AG04449 (cell line): ENCODE measurements at regions of chr1 and their contacts with region 1.

Region 1: DNA sequence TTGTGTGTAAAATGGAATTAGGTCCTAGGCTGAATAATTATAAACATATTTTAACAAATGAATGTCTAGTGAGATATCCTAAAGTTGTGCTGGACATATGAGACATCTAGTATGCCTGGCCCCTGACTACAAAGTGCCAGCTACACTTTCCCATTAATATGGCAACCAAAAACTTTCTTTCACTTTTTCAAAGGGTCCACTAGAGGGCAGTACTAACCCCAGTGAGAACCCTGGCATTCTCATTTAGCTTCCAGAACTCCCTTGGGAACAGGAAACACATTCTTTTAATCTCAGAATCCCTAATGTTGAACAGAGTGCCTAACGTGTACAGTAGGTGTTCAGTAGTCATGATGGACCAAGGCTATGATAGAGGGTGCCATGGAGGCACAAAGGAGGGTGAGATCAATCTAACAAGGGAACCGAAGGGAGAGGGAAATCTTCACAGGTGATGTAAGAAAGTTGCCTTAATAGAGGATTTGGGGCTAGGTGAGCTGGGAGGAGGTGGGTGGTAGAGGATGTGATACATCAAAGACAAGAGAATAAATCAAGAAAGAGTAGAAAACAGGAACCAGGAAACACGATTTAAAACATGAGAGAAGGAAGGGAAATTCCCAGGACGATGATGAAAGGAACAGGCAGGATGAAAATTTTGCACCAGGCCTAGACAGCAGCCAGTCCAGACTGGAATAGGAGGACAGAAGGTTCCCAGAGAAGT is 41.6 kb downstream of the NSL1 start:
- DNase-seq: no peak
- H3K4me3 ChIP-seq: no peak overlapping the region
- CTCF ChIP-seq: peak; percentile 43

Region 2: GRCh38 chr1:212700892-212701819 is 48.8 kb before region 1 on chr1:
- CTCF ChIA-PET with region 1: interaction called, 11 read pairs
- POLR2A ChIA-PET with region 1: no interaction called
- DNase-seq: no peak
- H3K4me3 ChIP-seq: peak overlapping the region; percentile 62
- CTCF ChIP-seq: peak; percentile 19

Region 3: GRCh38 chr1:212738330-212738729 is 11.6 kb before region 1 on chr1:
- CTCF ChIA-PET with region 1: interaction called, 83 read pairs
- POLR2A ChIA-PET with region 1: no interaction called
- DNase-seq: no peak
- H3K4me3 ChIP-seq: no peak overlapping the region
- CTCF ChIP-seq: no peak

Region 4: GRCh38 chr1:212774584-212774983 is 24.6 kb after region 1 on chr1:
- CTCF ChIA-PET with region 1: interaction called, 14 read pairs
- POLR2A ChIA-PET with region 1: no interaction called
- DNase-seq: no peak
- H3K4me3 ChIP-seq: no peak overlapping the region
- CTCF ChIP-seq: no peak

Region 5: GRCh38 chr1:212994926-212995325 is 244.9 kb after region 1 on chr1:
- CTCF ChIA-PET with region 1: interaction called, 47 read pairs
- POLR2A ChIA-PET with region 1: no interaction called
- DNase-seq: no peak
- H3K4me3 ChIP-seq: no peak overlapping the region
- CTCF ChIP-seq: no peak